ENCODE measurements at regions of chr6 and their contacts with region 1.

Region 1: DNA sequence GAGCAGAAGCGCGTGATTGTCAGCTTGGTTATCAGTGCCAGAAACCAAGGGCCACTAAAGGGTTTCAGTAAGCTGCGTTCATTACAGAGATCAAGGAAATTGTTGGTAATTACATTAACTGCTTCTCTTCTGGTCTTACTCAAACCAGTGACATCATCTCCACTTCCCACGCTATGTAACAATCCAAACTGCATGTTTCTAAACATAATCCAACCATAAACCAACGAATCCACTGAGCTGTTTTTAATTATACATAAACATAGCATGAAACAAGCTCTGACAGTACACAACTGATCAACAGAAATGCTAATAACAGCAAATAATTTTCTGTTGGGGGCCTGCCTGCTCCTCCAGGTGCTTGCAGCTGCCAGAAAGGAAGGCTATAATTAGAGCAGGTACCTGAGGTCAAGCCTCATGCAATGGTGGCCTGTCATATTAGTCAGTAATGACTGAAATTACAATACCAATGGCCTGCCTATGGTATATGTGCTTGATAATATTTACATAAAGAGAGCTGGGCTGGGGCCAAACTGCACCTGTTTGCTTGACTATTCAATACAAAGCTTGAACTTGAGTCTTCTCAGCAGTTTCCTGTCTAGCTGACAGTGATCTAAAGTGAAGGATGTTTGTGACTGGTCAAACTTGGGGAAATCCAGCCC is 40.1 kb downstream of the ILRUN start:
- DNase-seq: peak in 2 of 3 donors; percentile 55 to 69
- H3K4me3 ChIP-seq: peak overlapping the region in 6 of 7 experiments; percentile 53 to 77 (median 66)
- H3K27ac ChIP-seq: peak overlapping the region; percentile 71 to 90
- H3K4me1 ChIP-seq: peaks cover 18 to 40% (median 35%) of the 10 kb centered on the region in 4 experiments
- H3K27me3 ChIP-seq: no peaks in the 10 kb centered on the region

Region 2: GRCh38 chr6:34638834-34639736 is 17.4 kb before region 1 on chr6:
- CTCF ChIA-PET with region 1: interaction called, 18 read pairs
- POLR2A ChIA-PET with region 1: no interaction called
- DNase-seq: no peak
- H3K4me3 ChIP-seq: no peak overlapping the region
- H3K27ac ChIP-seq: no peak overlapping the region
- H3K4me1 ChIP-seq: no peaks in the 10 kb centered on the region
- H3K27me3 ChIP-seq: no peaks in the 10 kb centered on the region

Region 3: DNA sequence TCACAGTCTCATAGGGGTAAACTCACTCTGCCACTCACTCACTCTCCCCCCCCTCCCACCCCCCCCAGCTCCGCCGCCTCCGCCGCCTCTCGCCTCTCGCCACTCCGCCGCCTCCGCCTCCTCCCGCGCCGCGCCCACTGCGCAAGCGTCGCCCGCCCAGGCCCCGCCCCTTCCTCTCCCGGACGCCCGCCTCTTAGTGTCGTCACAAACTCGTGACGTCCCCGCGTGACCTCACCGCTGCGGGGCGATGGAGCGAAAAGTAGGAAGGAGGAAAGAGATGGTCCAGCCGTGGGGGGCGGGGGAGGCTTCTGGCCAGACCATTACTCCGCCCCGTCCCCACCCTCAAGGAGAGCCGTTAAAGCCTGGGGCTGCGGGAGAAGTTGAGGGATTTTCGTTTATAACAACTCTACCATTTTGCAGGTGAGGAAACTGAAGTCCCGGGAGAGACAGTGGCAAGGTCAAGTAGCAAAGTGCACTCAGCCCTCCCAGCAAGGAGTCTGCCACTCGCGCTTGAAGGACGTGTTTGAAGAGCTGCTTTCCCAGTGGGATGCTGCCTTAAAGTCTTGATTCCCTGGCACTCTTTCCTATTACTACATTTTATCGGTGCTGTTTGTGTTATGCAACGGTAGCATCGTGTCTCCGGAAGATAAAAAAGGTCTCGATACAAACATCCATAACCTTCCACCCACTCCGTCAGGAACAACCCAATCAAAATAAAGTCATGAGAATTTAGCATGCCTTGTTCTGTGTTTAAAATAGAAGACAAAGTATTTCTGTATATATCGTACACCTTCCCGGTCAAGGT is 40.4 kb after region 1 on chr6 and contains the start of gene ILRUN:
- CTCF ChIA-PET with region 1: interaction called, 4 read pairs
- POLR2A ChIA-PET with region 1: interaction called, 11 read pairs
- DNase-seq: peak; percentile 94 to 96 (median 96)
- H3K4me3 ChIP-seq: peak within 1 kb of the TSS; percentile 85 to 99 (median 93)
- H3K27ac ChIP-seq: peak within 1 kb of the TSS; percentile 84 to 96
- H3K4me1 ChIP-seq: peaks cover 9 to 37% (median 25%) of the 10 kb centered on the region in 4 experiments
- H3K27me3 ChIP-seq: no peaks in the 10 kb centered on the region

Measured in common myeloid progenitor, CD34-positive (primary cell).